B cell (primary cell): ENCODE measurements at regions of chr15 and their contacts with region 1.

Region 1: DNA sequence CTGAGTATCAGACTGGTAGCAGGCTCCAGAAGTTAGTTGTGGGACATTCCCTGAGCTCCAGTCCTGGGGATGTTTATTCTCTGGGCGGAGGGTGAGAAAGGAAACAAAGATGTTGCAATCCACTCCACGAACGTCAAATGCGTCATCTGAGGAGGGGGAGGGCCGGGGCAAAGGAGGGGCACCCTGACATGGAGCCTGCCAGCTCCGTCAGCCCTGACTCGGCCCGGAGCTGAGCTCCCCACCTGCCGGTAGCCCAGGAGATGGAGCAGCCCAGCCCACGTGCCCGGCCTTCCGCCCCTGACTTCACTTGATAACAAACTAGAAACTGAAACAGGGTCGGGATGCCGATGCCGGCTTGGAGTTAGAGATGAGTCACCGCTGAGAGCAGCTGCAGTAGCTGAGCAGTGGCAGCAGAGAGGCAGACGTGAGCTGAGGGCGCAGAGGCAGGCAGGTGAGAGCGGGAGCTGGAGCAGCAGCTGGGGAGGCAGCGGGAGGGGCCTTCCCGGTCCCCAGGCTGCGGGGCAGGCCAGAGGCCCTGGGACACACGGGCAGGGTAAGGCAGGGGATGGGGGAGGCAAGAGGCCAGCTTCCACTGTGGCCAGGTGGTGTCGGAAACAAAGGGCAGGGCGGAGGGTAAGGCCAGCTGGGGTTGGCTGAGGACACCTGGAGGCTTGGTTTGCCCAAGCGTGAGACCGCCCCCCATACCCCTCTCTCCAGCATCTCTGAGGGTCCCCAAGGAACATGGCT is at the start of gene ISG20:
- DNase-seq: peak; percentile 98
- ATAC-seq: peak; percentile 74
- H3K4me3 ChIP-seq: peak within 1 kb of the TSS; percentile 48 to 76 (median 74)
- H3K4me3 Mint-ChIP-seq: peak within 1 kb of the TSS; percentile 93
- H3K27ac ChIP-seq: peak within 1 kb of the TSS; percentile 97 to 99
- H3K27ac Mint-ChIP-seq: peak within 1 kb of the TSS; percentile 98
- H3K4me1 ChIP-seq: peaks cover 79 to 91% of the 10 kb centered on the region in 2 donors
- H3K4me1 Mint-ChIP-seq: peaks cover 76% of the 10 kb centered on the region
- H3K27me3 ChIP-seq: no peaks in the 10 kb centered on the region
- H3K27me3 Mint-ChIP-seq: no peaks in the 10 kb centered on the region
- CTCF ChIP-seq: peak; percentile 53
- total RNA-seq, gene ISG20: 173 and 190 TPM in 2 replicates

Region 2: DNA sequence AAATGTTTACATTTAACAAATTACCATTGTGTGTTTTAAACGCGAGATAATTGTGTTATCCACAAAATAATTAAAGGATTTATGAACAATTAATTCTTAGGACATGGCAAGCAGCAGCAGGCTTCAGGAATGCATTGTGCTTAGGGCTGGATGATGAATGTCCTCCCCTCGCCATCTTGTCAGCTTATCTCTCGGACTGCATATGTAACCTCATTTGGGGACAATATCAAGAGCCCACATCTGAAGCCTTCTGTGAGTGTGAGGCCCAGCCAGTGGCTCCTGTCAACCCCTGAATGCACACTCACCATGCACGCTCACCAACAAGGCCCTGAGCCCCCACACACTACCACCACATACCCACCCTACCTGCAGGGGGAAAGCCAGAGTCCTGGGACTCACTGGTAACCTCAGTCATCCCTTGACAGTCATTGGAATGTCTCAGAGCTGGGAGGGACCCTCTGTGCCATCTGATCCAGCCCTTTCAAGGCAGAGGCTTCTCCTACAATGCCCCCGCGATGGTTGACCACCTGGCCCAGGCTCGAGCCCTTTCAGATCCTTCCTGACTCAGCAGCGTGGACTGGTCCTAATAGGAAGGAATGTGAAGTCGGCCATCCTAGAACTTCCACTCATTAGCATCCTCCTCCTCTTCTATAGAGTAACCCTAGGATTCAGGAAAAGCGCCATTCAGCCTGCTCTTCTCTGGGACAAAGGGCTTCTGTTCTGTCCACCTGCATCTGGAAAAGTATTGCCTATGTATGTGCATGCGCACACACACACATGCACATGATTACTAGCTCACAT is 209.8 kb before region 1 on chr15:
- CTCF ChIA-PET with region 1: no interaction called
- POLR2A ChIA-PET with region 1: interaction called, 11 read pairs
- intact Hi-C with region 1: no loop called
- DNase-seq: no peak
- ATAC-seq: no peak
- H3K4me3 ChIP-seq: no peak overlapping the region
- H3K4me3 Mint-ChIP-seq: no peak overlapping the region
- H3K27ac ChIP-seq: no peak overlapping the region
- H3K27ac Mint-ChIP-seq: no peak overlapping the region
- H3K4me1 ChIP-seq: no peaks in the 10 kb centered on the region
- H3K4me1 Mint-ChIP-seq: no peaks in the 10 kb centered on the region
- H3K27me3 ChIP-seq: peaks cover 0 to 4% (median 0%) of the 10 kb centered on the region in 4 experiments
- H3K27me3 Mint-ChIP-seq: peaks cover 41% of the 10 kb centered on the region
- CTCF ChIP-seq: no peak

Region 3: GRCh38 chr15:88649286-88649733 is 10.5 kb after region 1 on chr15:
- CTCF ChIA-PET with region 1: interaction called, 11 read pairs
- POLR2A ChIA-PET with region 1: interaction called, 3 read pairs
- intact Hi-C with region 1: no loop called
- DNase-seq: peak; percentile 73
- ATAC-seq: peak; percentile 74
- H3K4me3 ChIP-seq: peak overlapping the region in 1 of 5 experiments; percentile 37
- H3K4me3 Mint-ChIP-seq: peak overlapping the region; percentile 72
- H3K27ac ChIP-seq: peak overlapping the region; percentile 76 to 91
- H3K27ac Mint-ChIP-seq: peak overlapping the region; percentile 96
- H3K4me1 ChIP-seq: peaks cover 85 to 96% of the 10 kb centered on the region in 2 donors
- H3K4me1 Mint-ChIP-seq: peaks cover 84% of the 10 kb centered on the region
- H3K27me3 ChIP-seq: no peaks in the 10 kb centered on the region
- H3K27me3 Mint-ChIP-seq: no peaks in the 10 kb centered on the region
- CTCF ChIP-seq: no peak

Region 4: DNA sequence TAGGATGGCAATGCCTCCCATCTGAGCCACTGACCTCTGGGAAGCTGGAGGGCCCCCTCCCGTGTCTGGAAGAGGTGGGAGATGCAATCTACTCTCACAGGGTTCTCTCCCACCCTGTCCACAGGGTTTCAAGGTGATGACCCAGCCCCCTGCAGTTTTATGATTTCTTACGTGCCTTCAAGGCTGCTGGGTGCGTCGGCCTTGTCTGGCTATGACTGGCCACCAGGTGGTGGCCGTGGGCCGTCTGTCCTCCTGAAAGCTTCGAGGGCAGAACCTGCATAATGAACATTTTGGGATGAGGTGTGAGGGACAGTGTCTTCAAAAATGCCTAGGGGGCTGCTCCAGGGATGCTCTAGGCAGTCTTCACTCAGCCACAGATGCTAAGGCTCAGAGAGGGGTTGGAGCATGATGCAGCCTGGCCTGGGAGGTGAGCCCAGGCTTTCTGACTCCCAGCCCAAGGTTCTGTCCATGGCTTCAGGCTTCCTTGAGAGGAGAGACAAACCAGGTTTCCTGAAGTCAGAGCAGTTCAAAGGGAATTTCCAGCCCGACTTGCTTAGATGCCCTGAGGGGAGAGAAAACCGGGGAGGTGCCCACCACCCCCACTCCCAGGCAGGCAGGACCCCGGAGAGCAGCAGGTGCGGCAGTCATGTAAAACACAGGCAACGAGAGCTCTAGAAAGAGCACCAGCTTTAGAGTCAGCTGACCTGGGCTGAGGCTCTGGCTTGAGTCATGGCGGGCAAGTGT is 18.7 kb after region 1 on chr15:
- CTCF ChIA-PET with region 1: interaction called, 18 read pairs
- POLR2A ChIA-PET with region 1: interaction called, 10 read pairs
- intact Hi-C with region 1: no loop called
- DNase-seq: peak; percentile 47
- ATAC-seq: no peak
- H3K4me3 ChIP-seq: no peak overlapping the region
- H3K4me3 Mint-ChIP-seq: peak overlapping the region; percentile 82
- H3K27ac ChIP-seq: peak overlapping the region; percentile 80 to 85
- H3K27ac Mint-ChIP-seq: peak overlapping the region; percentile 98
- H3K4me1 ChIP-seq: peaks cover 58 to 69% of the 10 kb centered on the region in 2 donors
- H3K4me1 Mint-ChIP-seq: peaks cover 69% of the 10 kb centered on the region
- H3K27me3 ChIP-seq: no peaks in the 10 kb centered on the region
- H3K27me3 Mint-ChIP-seq: no peaks in the 10 kb centered on the region
- CTCF ChIP-seq: no peak

Region 5: DNA sequence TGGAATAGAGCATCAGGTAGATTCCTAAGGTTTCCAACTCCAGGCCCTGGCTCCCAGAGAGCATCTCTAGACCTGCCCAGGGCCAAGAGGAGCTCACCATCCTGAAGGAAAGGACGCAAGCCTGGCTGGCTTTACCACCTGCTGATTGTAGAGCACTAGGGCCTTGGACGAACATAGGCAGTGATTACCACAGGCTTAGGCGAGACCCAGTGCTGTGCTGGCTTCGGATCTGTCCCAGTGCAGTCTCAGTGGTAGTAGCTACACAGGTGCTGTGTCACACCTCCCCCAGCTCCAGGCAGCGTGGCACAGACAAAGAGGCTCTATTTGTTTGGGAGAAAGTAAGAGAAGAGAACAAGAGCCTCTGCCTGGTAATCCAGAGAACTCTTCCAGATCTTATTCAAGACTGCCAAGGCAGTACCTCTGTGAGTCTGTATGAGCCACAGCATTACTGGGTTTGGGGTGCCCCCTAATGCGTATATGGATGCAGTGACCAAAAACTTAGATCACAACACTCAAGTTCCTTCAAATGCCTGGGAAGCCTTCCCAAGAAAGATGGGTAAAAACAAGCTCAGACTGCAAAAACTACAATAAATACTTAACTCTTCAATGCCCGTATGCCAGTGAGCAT is 25.5 kb after region 1 on chr15:
- CTCF ChIA-PET with region 1: interaction called, 11 read pairs
- POLR2A ChIA-PET with region 1: no interaction called
- intact Hi-C with region 1: no loop called
- DNase-seq: peak; percentile 72
- ATAC-seq: peak; percentile 79
- H3K4me3 ChIP-seq: no peak overlapping the region
- H3K4me3 Mint-ChIP-seq: no peak overlapping the region
- H3K27ac ChIP-seq: no peak overlapping the region
- H3K27ac Mint-ChIP-seq: peak overlapping the region; percentile 78
- H3K4me1 ChIP-seq: peaks cover 13 to 14% of the 10 kb centered on the region in 2 donors
- H3K4me1 Mint-ChIP-seq: peaks cover 25% of the 10 kb centered on the region
- H3K27me3 ChIP-seq: no peaks in the 10 kb centered on the region
- H3K27me3 Mint-ChIP-seq: peaks cover 7% of the 10 kb centered on the region
- CTCF ChIP-seq: peak; percentile 68